ENCODE measurements at regions of chr1 and their contacts with region 1.

Region 1: GRCh38 chr1:31272369-31272768 is 24.2 kb downstream of the SNRNP40 start:
- DNase-seq: no peak
- H3K4me3 ChIP-seq: no peak overlapping the region
- H3K27ac ChIP-seq: no peak overlapping the region
- H3K4me1 ChIP-seq: peaks cover 8% of the 10 kb centered on the region
- H3K27me3 ChIP-seq: no peaks in the 10 kb centered on the region
- CTCF ChIP-seq: no peak

Region 2: DNA sequence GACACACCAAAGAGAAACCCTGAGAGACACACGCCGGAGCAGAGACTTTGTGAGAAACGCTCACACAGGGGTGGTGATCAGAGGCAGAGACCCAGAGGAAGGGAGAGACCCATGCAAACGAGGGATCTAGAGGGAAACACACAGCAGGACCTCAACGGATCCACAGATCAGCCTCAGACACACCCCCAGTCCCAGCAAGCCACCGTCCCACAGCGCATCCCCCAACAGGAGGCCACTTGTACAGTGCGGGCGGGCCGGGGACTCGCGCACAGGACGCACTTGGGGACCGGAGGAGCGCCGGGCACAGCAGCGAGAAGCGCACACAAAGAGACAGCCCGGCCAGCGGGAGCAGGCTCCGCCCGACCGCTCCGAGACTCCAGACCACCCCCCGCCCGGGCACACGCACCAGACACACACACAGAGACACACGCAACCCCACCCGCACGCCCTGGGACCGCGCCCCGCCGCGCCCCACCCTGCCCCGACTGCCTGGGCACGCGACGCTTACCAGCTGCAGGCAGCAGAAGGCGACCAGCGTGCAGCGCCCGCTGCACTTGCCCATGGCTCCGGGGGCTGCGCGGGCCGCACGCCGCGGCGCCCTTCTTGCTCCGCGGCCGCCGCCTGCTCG is 33.3 kb before region 1 on chr1:
- CTCF ChIA-PET with region 1: no interaction called
- dilution Hi-C with region 1: no loop called
- in situ Hi-C with region 1: no loop called
- intact Hi-C with region 1: no loop called
- DNase-seq: peak; percentile 29
- H3K4me3 ChIP-seq: peak overlapping the region in 2 of 3 experiments; percentile 30 to 34
- H3K27ac ChIP-seq: no peak overlapping the region
- H3K4me1 ChIP-seq: peaks cover 9% of the 10 kb centered on the region
- H3K27me3 ChIP-seq: peaks cover 18% of the 10 kb centered on the region
- CTCF ChIP-seq: no peak

Region 3: GRCh38 chr1:31310198-31310597 is 37.8 kb after region 1 on chr1:
- CTCF ChIA-PET with region 1: no interaction called
- dilution Hi-C with region 1: loop called (anchors 5 kb)
- in situ Hi-C with region 1: no loop called
- intact Hi-C with region 1: no loop called
- DNase-seq: no peak
- H3K4me3 ChIP-seq: no peak overlapping the region
- H3K27ac ChIP-seq: no peak overlapping the region
- H3K4me1 ChIP-seq: peaks cover 8% of the 10 kb centered on the region
- H3K27me3 ChIP-seq: no peaks in the 10 kb centered on the region
- CTCF ChIP-seq: no peak

Region 4: GRCh38 chr1:31368611-31369107 is 96.3 kb after region 1 on chr1:
- CTCF ChIA-PET with region 1: no interaction called
- dilution Hi-C with region 1: loop called (anchors 5 kb)
- in situ Hi-C with region 1: no loop called
- intact Hi-C with region 1: no loop called
- DNase-seq: no peak
- H3K4me3 ChIP-seq: no peak overlapping the region
- H3K27ac ChIP-seq: no peak overlapping the region
- H3K4me1 ChIP-seq: peaks cover 11% of the 10 kb centered on the region
- H3K27me3 ChIP-seq: no peaks in the 10 kb centered on the region
- CTCF ChIP-seq: no peak

Region 5: DNA sequence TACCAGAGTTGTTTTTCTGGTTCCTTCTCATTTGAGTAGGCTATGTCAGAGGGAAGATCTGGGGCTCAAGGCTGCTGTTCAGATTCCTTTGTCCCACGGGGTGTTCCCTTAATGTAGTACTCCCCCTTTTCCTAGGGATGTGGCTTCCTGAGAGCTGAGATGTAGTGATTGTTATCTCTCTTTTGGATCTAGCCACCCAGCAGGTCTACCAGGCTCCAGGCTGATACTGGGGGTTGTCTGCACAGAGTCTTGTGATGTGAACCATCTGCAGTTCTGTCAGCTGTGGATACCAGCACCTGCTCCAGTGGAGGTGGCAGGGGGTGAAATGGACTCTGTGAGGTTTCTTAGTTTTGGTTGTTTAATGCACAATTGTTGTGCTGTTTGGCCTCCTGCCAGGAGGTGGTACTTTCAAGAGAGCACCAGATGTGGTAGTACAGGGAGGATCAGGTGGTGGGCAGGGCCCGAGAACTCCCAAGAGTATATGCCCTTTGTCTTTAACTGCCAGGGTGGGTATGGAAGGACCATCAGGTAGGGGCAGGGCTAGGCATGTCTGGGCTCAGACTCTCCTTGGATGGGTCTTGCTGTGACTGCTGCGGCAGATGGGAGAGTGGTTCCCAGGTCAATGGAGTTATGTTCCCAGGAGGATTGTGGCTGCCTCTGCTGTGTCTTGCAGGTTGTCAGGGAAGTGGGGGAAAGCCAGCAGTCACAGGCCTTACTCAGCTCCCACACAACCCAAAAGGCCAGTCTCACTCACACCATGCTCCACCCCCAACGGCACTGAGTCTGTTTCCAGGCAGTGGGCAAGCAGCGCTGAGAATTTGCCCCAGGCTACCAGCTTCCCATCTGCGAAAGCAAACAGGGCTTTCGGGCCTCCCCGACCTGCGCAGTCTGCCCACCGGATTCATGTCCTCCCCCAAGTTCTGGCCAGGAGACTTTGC is 204.8 kb after region 1 on chr1:
- CTCF ChIA-PET with region 1: no interaction called
- dilution Hi-C with region 1: no loop called
- in situ Hi-C with region 1: no loop called
- intact Hi-C with region 1: no loop called
- DNase-seq: peak; percentile 87
- H3K4me3 ChIP-seq: no peak overlapping the region
- H3K27ac ChIP-seq: peak overlapping the region; percentile 56
- H3K4me1 ChIP-seq: peaks cover 27% of the 10 kb centered on the region
- H3K27me3 ChIP-seq: no peaks in the 10 kb centered on the region
- CTCF ChIP-seq: no peak

Measured in mammary epithelial cell (primary cell).